ENCODE measurements at regions of chr12 and their contacts with region 1.

Region 1: DNA sequence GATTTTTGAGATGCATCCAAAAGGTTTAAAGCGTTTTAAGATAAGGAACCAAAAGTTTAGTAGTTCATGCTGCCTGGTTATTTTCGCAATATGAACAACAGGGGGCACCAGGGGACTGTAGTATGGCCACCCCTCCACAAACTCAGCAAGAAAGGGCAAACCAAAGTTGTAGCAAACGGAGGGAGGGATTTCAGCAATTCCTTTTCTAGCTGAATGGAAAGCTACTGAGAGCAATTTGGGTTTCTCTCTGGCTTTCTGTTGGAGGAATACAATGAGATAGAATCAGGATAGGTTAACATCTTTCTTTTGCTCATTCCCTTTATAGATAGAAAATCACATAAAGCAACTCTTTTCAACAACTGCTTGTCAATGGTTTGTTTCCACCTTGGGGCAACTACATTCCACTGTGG is 62.5 kb downstream of the DRAM1 start:
- DNase-seq: peak; percentile 76
- H3K4me3 ChIP-seq: no peak overlapping the region
- H3K27ac ChIP-seq: no peak overlapping the region
- H3K4me1 ChIP-seq: peaks cover 22% of the 10 kb centered on the region
- H3K27me3 ChIP-seq: no peaks in the 10 kb centered on the region
- CTCF ChIP-seq: peak; percentile 64 to 66
- POLR2A ChIP-seq: no peak

Region 2: GRCh38 chr12:101773650-101774162 is 166.2 kb before region 1 on chr12:
- CTCF ChIA-PET with region 1: interaction called, 13 read pairs
- POLR2A ChIA-PET with region 1: no interaction called
- dilution Hi-C with region 1: no loop called
- intact Hi-C with region 1: no loop called
- DNase-seq: peak; percentile 71
- H3K4me3 ChIP-seq: no peak overlapping the region
- H3K27ac ChIP-seq: no peak overlapping the region
- H3K4me1 ChIP-seq: no peaks in the 10 kb centered on the region
- H3K27me3 ChIP-seq: no peaks in the 10 kb centered on the region
- CTCF ChIP-seq: peak; percentile 73 to 84
- POLR2A ChIP-seq: no peak

Region 3: GRCh38 chr12:102119674-102120563 is 180.1 kb after region 1 on chr12 and contains the starts of genes NUP37 and PARPBP:
- CTCF ChIA-PET with region 1: no interaction called
- POLR2A ChIA-PET with region 1: no interaction called
- dilution Hi-C with region 1: no loop called
- intact Hi-C with region 1: loop called (anchors 5 kb)
- DNase-seq: peak; percentile 93
- H3K4me3 ChIP-seq: peak within 1 kb of the TSS; percentile 67 to 96 (median 89)
- H3K27ac ChIP-seq: peak within 1 kb of the TSS; percentile 73
- H3K4me1 ChIP-seq: peaks cover 17% of the 10 kb centered on the region
- H3K27me3 ChIP-seq: no peaks in the 10 kb centered on the region
- CTCF ChIP-seq: no peak
- POLR2A ChIP-seq: peak; percentile 91
- total RNA-seq, gene NUP37: 41.3 and 46.8 TPM in 2 replicates
- total RNA-seq, gene PARPBP: 19.0 and 19.6 TPM in 2 replicates

Region 4: DNA sequence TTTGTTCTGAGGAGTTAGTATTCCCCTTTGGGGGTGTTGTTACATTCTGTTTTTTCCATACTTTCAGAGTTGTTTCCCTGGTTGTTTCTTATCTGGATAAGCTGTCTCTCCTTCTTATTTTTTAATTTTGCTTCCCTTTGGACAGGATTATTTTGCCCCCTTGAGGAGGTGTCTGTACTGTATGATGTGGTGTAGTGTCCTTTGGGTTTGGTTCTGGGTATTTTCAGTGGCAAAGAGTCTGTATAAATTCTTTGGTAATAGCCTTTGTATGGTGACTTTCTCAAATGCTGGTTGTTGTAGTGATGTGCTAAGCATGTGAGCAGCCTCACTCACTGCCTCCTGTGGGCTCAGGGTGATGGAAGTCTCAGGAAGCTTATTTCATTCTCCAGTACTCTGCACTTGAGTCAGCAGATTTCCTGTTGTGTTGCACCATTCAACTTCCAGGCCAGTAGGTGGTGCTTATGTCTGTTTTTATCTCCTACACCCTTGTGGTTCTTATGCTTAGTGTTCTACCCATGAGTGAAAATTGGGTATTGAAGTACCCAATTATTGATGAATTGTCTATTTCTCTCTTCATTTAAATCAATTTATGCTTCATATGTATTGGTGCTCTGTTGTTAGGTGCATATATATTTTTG is 361.1 kb after region 1 on chr12:
- CTCF ChIA-PET with region 1: interaction called, 3 read pairs
- POLR2A ChIA-PET with region 1: no interaction called
- dilution Hi-C with region 1: no loop called
- intact Hi-C with region 1: loop called (anchors 1 kb)
- DNase-seq: peak; percentile 50
- H3K4me3 ChIP-seq: no peak overlapping the region
- H3K27ac ChIP-seq: no peak overlapping the region
- H3K4me1 ChIP-seq: no peaks in the 10 kb centered on the region
- H3K27me3 ChIP-seq: no peaks in the 10 kb centered on the region
- CTCF ChIP-seq: peak; percentile 24 to 38
- POLR2A ChIP-seq: no peak

Region 5: DNA sequence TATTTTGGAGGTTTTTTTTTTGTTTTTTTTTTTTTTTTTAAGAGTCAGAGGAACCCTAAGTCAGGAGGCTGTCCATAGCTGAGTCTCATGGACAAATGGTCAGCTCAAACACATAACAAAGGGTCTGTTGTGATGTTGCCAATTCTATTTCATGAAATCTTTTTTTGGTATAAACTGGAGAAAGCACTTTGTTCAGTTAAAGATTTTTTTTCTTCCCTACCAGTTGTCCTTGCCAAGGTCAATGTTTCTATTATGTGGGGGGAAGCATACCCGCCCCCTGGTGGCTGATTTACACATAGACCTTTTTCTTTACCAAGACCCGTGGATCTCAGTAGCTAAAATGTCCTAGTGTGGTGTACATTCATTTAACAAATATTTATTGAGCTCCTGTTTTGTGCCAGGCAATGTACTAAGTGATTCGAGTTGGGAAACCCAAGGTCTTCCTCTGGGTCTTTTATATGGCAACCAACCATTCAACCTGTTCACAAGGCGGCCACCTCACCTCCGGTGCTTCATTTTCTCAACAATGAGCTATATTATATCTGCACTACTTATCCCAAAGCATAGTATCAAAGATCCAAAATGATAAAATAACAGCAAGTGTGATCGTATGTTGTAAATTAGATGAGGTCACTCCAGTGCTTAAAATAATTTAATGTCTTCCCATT is 762.7 kb after region 1 on chr12:
- CTCF ChIA-PET with region 1: interaction called, 31 read pairs
- POLR2A ChIA-PET with region 1: no interaction called
- dilution Hi-C with region 1: no loop called
- intact Hi-C with region 1: loop called (anchors 1 kb)
- DNase-seq: peak; percentile 24
- H3K4me3 ChIP-seq: no peak overlapping the region
- H3K27ac ChIP-seq: no peak overlapping the region
- H3K4me1 ChIP-seq: no peaks in the 10 kb centered on the region
- H3K27me3 ChIP-seq: no peaks in the 10 kb centered on the region
- CTCF ChIP-seq: peak; percentile 37 to 52
- POLR2A ChIP-seq: no peak

Region 6: GRCh38 chr12:102769319-102769916 is 829.6 kb after region 1 on chr12:
- CTCF ChIA-PET with region 1: no interaction called
- POLR2A ChIA-PET with region 1: no interaction called
- dilution Hi-C with region 1: no loop called
- intact Hi-C with region 1: loop called (anchors 1 kb)
- DNase-seq: peak; percentile 34
- H3K4me3 ChIP-seq: no peak overlapping the region
- H3K27ac ChIP-seq: no peak overlapping the region
- H3K4me1 ChIP-seq: no peaks in the 10 kb centered on the region
- H3K27me3 ChIP-seq: no peaks in the 10 kb centered on the region
- CTCF ChIP-seq: peak; percentile 35 to 49
- POLR2A ChIP-seq: no peak

Region 7: DNA sequence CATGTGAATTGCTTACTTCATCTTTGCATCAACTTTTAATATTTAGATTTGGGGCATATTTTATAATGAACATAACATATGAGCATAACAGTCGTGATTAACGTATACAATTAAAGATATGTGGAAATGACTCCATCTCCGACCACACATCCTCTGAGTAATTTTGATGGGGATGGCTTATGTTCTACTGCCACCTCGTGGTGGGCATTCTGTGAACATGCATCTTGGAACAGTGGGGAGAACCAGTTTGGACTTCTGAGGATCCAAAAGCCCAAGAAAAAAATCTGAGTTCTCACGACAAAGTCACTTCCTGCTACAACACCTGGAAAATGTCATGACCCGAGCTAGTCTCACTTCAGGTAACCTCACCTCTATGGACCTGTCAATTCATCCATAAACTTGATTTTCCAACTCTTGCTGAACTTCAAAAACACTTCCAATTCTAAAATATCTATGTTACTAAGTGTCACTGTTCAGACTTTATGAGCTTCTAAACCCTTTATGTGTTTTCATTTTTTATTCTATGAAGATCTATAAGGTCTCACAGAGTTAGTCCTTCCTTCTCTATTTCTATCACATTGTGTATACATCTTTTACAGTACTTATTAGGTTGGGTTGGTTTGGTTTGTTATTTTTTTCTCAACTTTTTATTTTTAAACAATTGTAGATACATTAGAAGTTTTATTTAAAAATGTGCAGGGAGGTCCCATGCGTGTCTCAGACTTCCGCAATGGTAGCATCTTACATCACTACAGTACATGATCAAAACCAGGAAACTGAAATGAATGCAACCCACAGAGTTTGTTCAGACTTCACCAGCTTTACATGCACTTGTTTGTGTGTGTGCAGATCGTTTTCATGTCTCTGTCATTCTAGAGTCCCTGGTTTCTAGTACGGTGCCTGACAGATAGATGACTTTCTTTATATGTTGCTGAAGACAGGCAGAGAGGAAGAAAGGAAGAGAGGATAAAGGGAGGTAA is 1609.1 kb after region 1 on chr12:
- CTCF ChIA-PET with region 1: interaction called, 24 read pairs
- POLR2A ChIA-PET with region 1: no interaction called
- dilution Hi-C with region 1: no loop called
- intact Hi-C with region 1: loop called (anchors 1 kb)
- DNase-seq: peak; percentile 75
- H3K4me3 ChIP-seq: no peak overlapping the region
- H3K27ac ChIP-seq: no peak overlapping the region
- H3K4me1 ChIP-seq: no peaks in the 10 kb centered on the region
- H3K27me3 ChIP-seq: peaks cover 0 to 5% of the 10 kb centered on the region in 2 experiments
- CTCF ChIP-seq: peak; percentile 66 to 73
- POLR2A ChIP-seq: no peak